ENCODE measurements at regions of chr16 and their contacts with region 1.

Region 1: DNA sequence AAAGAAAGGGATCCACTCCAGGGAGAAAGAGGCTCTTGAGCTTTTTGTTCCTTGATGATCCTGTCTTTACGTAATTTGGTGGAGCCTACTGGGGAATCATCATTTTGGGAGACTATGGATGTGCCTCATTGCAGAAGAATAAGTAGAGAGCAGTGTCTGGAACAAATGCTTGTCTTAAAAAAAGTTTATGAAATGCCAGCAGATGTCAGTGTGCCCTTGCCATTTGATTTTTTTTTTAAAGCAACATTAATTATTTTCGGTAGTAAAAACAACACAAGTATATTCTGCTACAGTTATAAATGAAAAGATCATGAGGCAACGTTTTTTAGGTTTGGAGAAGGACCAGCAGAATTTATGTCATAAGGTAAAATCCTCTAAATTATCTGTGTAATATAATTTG is 934.8 kb upstream of the EEF2KMT start:
- H3K4me3 ChIP-seq: no peak overlapping the region
- H3K27ac ChIP-seq: no peak overlapping the region
- H3K4me1 ChIP-seq: no peaks in the 10 kb centered on the region
- CTCF ChIP-seq: no peak

Region 2: GRCh38 chr16:6020162-6020985 is 12.1 kb before region 1 on chr16:
- CTCF ChIA-PET with region 1: interaction called, 10 read pairs
- POLR2A ChIA-PET with region 1: no interaction called
- H3K4me3 ChIP-seq: no peak overlapping the region
- H3K27ac ChIP-seq: no peak overlapping the region
- H3K4me1 ChIP-seq: no peaks in the 10 kb centered on the region
- CTCF ChIP-seq: no peak

Region 3: GRCh38 chr16:6047325-6047724 is 14.9 kb after region 1 on chr16:
- CTCF ChIA-PET with region 1: no interaction called
- POLR2A ChIA-PET with region 1: no interaction called
- H3K4me3 ChIP-seq: no peak overlapping the region
- H3K27ac ChIP-seq: no peak overlapping the region
- H3K4me1 ChIP-seq: no peaks in the 10 kb centered on the region
- CTCF ChIP-seq: no peak